ENCODE measurements at regions of chr16 and their contacts with region 1.

Region 1: DNA sequence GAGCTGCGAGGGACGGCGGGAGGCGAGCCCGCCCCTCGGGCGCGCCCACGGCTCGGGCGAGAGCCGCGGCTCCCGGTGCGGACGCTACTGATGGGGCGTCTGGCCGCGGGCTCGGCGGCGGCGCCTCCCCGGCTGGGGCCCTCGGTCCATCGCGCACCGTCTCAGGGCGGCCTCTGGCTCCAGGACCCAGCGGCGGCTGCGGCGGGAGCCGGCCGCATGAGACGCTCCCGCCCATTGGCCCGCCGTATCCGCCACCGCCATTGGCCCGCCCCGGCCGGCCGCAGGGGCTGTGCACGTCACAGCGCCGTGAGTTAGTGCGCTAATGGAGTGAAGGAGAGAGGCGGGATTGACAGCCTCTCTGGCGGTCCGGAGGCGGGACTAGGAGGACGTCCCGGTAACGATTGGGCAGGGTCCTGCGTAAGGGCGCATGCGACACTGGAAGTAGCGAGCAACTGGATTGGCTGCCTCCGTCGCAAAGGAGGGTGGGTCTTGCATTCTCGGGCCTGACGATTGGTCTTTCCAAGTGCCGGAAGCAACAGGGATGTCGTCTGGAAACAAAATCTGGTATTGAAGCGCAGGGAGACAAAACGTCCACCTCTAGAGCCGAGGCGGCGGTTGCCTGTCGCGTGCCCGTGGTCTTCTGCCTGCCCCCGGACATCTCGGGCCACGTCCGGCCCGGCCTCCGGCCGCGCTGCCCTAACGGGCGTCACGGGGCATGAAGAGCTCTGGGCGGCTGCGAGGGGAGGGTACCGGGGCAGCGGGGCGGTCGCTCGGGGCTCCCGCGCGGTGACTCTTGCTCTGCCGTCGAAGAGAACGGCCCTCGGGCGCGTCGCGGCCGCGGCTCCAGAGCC is at the start of gene ANKRD11:
- DNase-seq: peak; percentile 100
- ATAC-seq: peak; percentile 91
- H3K4me3 Mint-ChIP-seq: peak within 1 kb of the TSS; percentile 92
- H3K27ac Mint-ChIP-seq: peak within 1 kb of the TSS; percentile 95
- H3K4me1 Mint-ChIP-seq: peaks cover 50% of the 10 kb centered on the region
- H3K27me3 Mint-ChIP-seq: no peaks in the 10 kb centered on the region
- total RNA-seq, gene ANKRD11: 184 to 235 TPM

Region 2: DNA sequence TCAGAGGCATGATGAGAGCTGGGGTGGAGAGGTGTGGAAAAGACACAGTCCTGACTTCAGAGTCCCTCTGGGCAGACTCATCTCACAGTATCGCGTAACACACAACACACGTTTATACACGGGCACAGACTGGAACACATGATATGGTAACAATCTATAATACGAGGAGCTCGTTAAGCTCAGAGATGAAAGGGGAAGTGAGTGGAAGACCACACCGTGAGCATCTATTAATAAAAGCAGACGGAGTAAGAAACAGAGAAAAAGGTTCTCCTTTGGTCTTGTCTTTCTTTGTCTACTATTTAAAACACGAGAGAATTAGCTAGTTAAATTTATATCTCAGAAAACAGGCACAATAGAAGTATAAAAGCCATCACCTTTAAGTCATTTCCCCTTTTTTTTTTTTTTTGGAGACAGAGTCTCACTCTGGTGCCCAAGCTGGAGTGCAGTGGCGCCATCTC is 13.8 kb before region 1 on chr16:
- CTCF ChIA-PET with region 1: no interaction called
- DNase-seq: no peak
- ATAC-seq: peak; percentile 10
- H3K4me3 Mint-ChIP-seq: no peak overlapping the region
- H3K27ac Mint-ChIP-seq: peak overlapping the region; percentile 2
- H3K4me1 Mint-ChIP-seq: peaks cover 85% of the 10 kb centered on the region
- H3K27me3 Mint-ChIP-seq: no peaks in the 10 kb centered on the region

Region 3: DNA sequence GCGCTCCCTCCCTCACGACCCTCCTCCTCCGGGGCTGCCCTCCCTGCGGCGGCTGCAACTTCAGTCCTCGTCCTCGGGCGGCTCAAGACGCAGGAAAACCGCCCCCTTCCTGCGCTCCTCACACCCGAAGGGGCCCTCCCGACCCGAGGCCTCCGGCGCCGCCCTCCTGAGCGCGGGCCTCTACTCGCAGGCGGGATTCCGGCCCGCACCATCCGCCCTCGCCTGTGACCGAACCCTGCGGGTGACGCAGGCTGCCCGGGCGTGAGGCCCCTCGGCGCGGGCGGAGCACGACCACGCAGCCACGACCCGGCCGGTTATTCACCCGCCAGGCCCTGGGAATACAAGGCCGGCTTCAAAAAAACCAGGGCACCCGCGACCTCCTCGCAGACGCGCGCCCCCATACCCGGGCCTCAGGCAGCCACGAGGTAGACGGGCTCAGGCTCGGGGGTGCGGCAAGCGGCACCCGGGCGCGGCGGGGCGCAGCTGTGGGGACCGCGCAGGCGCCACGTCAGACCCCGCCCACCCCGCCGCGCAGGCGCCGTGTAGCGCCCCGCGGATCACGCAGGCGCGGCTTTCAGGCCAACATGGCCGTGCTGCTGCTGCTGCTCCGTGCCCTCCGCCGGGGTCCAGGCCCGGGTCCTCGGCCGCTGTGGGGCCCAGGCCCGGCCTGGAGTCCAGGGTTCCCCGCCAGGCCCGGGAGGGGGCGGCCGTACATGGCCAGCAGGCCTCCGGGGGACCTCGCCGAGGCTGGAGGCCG is 17.4 kb after region 1 on chr16 and contains the start of gene SPG7:
- CTCF ChIA-PET with region 1: interaction called, 13 read pairs
- DNase-seq: peak; percentile 92
- ATAC-seq: peak; percentile 79
- H3K4me3 Mint-ChIP-seq: peak within 1 kb of the TSS; percentile 93
- H3K27ac Mint-ChIP-seq: peak within 1 kb of the TSS; percentile 92
- H3K4me1 Mint-ChIP-seq: peaks cover 42% of the 10 kb centered on the region
- H3K27me3 Mint-ChIP-seq: no peaks in the 10 kb centered on the region
- total RNA-seq, gene SPG7: 92.1 to 110 TPM

Measured in activated CD8-positive, alpha-beta memory T cell treated with anti-CD3 and anti-CD28 coated beads, Interleukin-2, amount 10 ng/mL, durations not matched to agents 7 days and 5 days (primary cell).